Activated CD4-positive, alpha-beta T cell treated with anti-CD3 and anti-CD28 coated beads, Interleukin-2, amount 10 ng/mL, durations not matched to agents 24 days and 14 days (primary cell): ENCODE measurements at regions of chrX and their contacts with region 1.

Region 1: GRCh38 chrX:45758319-45758718 is 557.6 kb upstream of the DIPK2B start:
- DNase-seq: peak; percentile 84
- H3K4me3 Mint-ChIP-seq: peak overlapping the region; percentile 82
- H3K27ac Mint-ChIP-seq: peak overlapping the region; percentile 99
- H3K4me1 Mint-ChIP-seq: peaks cover 62% of the 10 kb centered on the region
- H3K27me3 Mint-ChIP-seq: no peaks in the 10 kb centered on the region

Region 2: DNA sequence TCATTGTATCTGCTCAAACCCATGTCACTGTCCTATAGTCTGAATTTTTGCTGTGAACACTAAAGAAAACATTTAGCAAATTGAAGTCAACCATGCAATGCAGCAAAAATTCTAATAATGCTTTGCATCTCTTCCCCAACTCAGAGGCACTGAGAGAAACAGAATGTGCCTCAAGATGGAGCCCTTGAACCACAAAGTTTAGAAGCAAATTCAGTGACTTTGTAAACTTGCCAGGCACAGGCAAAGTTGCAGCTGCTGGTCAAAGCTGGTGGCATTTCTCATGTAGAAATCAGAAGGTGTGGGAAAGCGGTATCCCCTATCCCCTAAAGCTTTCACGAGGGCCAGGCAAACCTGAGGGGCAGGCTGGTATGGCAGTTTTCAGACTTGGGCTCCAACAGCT is 435.9 kb before region 1 on chrX:
- intact Hi-C with region 1: loop called (anchors 5 kb)
- DNase-seq: peak; percentile 59
- H3K4me3 Mint-ChIP-seq: no peak overlapping the region
- H3K27ac Mint-ChIP-seq: no peak overlapping the region
- H3K4me1 Mint-ChIP-seq: no peaks in the 10 kb centered on the region
- H3K27me3 Mint-ChIP-seq: no peaks in the 10 kb centered on the region

Region 3: GRCh38 chrX:45621376-45622041 is 136.8 kb before region 1 on chrX:
- intact Hi-C with region 1: loop called (anchors 2 kb)
- DNase-seq: peak; percentile 51
- H3K4me3 Mint-ChIP-seq: peak overlapping the region; percentile 35
- H3K27ac Mint-ChIP-seq: peak overlapping the region; percentile 89
- H3K4me1 Mint-ChIP-seq: peaks cover 18% of the 10 kb centered on the region
- H3K27me3 Mint-ChIP-seq: no peaks in the 10 kb centered on the region

Region 4: GRCh38 chrX:45719751-45720501 is 38.4 kb before region 1 on chrX:
- intact Hi-C with region 1: loop called (anchors 1 kb)
- DNase-seq: no peak
- H3K4me3 Mint-ChIP-seq: peak overlapping the region; percentile 51
- H3K27ac Mint-ChIP-seq: peak overlapping the region; percentile 87
- H3K4me1 Mint-ChIP-seq: peaks cover 32% of the 10 kb centered on the region
- H3K27me3 Mint-ChIP-seq: no peaks in the 10 kb centered on the region

Region 5: DNA sequence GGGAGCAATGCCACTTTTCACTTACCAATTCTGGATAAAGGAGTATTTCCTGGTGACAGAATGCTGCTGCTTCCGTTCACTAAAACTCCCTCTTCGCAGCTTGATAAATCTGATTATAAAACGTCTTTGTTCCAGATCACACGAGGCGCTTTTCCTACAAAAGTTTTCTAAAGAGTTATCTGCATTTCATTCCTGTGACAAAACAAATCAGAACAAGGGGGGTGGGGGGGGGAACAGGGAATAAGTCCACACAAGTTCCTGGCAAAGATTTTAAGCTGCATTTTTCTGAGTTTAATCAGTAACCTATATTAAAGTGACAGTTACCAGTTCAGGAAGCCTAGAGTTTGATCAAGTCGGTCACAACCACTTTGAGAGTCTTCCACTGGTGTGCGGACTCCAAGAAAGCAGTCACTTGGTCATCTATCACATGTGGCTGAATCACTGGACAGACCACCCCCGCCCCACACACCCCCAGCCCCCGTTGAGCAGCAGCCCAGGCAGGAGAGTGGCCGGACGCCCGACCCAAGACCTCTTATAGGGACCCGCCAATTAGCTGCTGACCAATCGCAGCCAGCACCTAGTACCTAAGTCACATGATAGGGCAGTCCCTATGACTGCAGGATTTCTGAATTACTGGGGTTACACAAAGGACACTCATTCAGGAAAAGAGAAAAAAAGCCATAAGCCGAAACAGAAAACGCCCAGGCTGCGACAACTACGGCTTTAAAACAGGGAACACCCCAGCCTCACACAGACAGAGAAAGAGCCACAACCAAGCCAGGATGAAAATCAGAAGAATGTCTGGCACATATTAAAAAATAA is 11.7 kb after region 1 on chrX:
- intact Hi-C with region 1: loop called (anchors 1 kb)
- DNase-seq: peak; percentile 77
- H3K4me3 Mint-ChIP-seq: peak overlapping the region; percentile 84
- H3K27ac Mint-ChIP-seq: peak overlapping the region; percentile 95
- H3K4me1 Mint-ChIP-seq: peaks cover 40% of the 10 kb centered on the region
- H3K27me3 Mint-ChIP-seq: no peaks in the 10 kb centered on the region